ENCODE measurements at regions of chr3 and their contacts with region 1.

Region 1: DNA sequence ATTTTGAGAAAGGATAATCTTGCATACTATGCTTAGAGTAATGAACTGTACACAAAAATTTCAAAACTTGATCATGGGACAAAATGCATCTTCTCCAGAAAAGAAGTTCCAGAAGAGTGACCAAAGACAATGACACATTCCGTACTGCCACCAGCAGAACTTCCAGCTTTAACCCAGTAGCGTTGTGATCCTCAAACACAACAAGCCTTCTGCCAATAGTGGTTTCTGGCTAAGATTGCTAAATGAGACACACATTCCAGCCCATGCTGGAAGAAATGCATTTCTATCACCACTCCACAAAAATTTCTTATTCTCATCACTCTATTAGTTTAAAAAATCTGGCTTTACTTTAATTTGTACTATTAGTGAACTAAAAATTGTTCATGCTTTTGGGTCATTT is 334.9 kb downstream of the TBC1D5 start:
- DNase-seq: peak; percentile 17
- H3K4me3 ChIP-seq: no peak overlapping the region
- H3K27ac ChIP-seq: no peak overlapping the region
- H3K4me1 ChIP-seq: no peaks in the 10 kb centered on the region
- H3K27me3 ChIP-seq: no peaks in the 10 kb centered on the region

Region 2: GRCh38 chr3:16589867-16590624 is 817.5 kb before region 1 on chr3:
- in situ Hi-C with region 1: loop called (anchors 10 kb)
- DNase-seq: no peak
- H3K4me3 ChIP-seq: no peak overlapping the region
- H3K27ac ChIP-seq: no peak overlapping the region
- H3K4me1 ChIP-seq: peaks cover 11% of the 10 kb centered on the region
- H3K27me3 ChIP-seq: no peaks in the 10 kb centered on the region

Region 3: GRCh38 chr3:17278006-17278405 is 129.6 kb before region 1 on chr3:
- in situ Hi-C with region 1: loop called (anchors 10 kb)
- DNase-seq: no peak
- H3K4me3 ChIP-seq: no peak overlapping the region
- H3K27ac ChIP-seq: no peak overlapping the region
- H3K4me1 ChIP-seq: no peaks in the 10 kb centered on the region
- H3K27me3 ChIP-seq: no peaks in the 10 kb centered on the region

Region 4: DNA sequence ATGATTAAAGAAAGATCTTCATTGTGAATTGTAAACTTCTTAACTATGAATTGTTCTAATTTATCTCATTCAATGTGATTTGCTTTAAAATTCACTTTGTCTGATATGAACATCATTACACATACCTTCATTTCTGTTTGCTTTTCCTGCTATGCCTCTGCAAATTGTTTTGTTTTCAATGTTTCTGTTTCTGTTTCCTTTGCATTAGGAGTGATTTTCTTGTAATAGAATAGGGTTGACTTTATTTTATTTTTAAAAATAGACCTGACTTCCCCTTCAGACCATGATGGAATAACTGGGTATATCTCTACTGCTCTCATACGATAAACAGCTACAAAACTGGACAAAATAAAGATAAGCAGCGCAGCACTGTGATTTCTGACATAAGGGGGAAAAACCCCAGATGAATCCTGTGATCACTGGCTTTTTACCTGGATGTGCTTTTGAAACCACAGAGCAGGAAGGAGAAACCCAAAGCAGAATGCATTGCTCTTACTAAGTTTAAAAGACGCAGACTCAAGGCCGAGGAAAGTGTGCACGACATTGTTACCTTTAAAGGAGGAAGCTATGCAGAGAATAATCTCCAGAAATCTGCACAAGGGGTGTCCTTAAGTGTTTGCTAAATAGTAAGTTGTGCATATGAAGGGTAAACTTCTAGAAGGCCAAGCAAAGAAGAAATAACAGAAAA is 85.3 kb before region 1 on chr3:
- in situ Hi-C with region 1: no loop called
- DNase-seq: no peak
- H3K4me3 ChIP-seq: no peak overlapping the region
- H3K27ac ChIP-seq: no peak overlapping the region
- H3K4me1 ChIP-seq: no peaks in the 10 kb centered on the region
- H3K27me3 ChIP-seq: no peaks in the 10 kb centered on the region

Measured in GM23248 (cell line).